Activated B cell treated with CpG ODN at 0.5 μM for 24 hours (primary cell): ENCODE measurements at regions of chr6 and their contacts with region 1.

Region 1: GRCh38 chr6:32971581-32972352 is 3.4 kb downstream of the BRD2 start:
- DNase-seq: peak; percentile 99
- ATAC-seq: peak; percentile 47
- H3K4me3 Mint-ChIP-seq: peak overlapping the region; percentile 91
- H3K27ac Mint-ChIP-seq: peak overlapping the region; percentile 99
- H3K4me1 Mint-ChIP-seq: peaks cover 44% of the 10 kb centered on the region
- H3K27me3 Mint-ChIP-seq: no peaks in the 10 kb centered on the region
- CTCF ChIP-seq: no peak

Region 2: DNA sequence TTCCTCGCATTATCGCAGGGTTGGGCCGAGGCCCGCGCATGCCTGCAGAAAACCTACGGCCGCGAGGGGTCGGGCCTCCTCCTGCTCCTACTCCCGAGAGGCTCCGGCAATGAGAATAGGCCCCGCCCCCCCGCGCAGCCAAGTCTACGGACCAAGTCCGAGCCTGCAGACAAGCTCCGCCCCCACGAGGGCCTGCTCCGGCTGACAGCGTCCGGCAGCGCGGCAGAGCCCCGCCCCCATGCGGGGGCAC is 776.2 kb before region 1 on chr6:
- CTCF ChIA-PET with region 1: no interaction called
- POLR2A ChIA-PET with region 1: interaction called, 13 read pairs
- intact Hi-C with region 1: loop called (anchors 2 kb)
- DNase-seq: peak; percentile 99
- ATAC-seq: peak; percentile 83
- H3K4me3 Mint-ChIP-seq: peak overlapping the region; percentile 99
- H3K27ac Mint-ChIP-seq: peak overlapping the region; percentile 100
- H3K4me1 Mint-ChIP-seq: peaks cover 57% of the 10 kb centered on the region
- H3K27me3 Mint-ChIP-seq: peaks cover 1% of the 10 kb centered on the region
- CTCF ChIP-seq: no peak

Region 3: GRCh38 chr6:32853541-32854375 is 118.0 kb before region 1 on chr6 and contains the starts of genes PSMB9 and TAP1:
- CTCF ChIA-PET with region 1: interaction called, 5 read pairs
- POLR2A ChIA-PET with region 1: interaction called, 145 read pairs
- intact Hi-C with region 1: no loop called
- DNase-seq: peak; percentile 91
- ATAC-seq: peak; percentile 80
- H3K4me3 Mint-ChIP-seq: peak within 1 kb of the TSS; percentile 99
- H3K27ac Mint-ChIP-seq: peak within 1 kb of the TSS; percentile 98
- H3K4me1 Mint-ChIP-seq: peaks cover 77% of the 10 kb centered on the region
- H3K27me3 Mint-ChIP-seq: no peaks in the 10 kb centered on the region
- CTCF ChIP-seq: peak; percentile 20
- total RNA-seq, gene PSMB9: 198 and 223 TPM in 2 replicates
- total RNA-seq, gene TAP1: 148 and 151 TPM in 2 replicates

Region 4: DNA sequence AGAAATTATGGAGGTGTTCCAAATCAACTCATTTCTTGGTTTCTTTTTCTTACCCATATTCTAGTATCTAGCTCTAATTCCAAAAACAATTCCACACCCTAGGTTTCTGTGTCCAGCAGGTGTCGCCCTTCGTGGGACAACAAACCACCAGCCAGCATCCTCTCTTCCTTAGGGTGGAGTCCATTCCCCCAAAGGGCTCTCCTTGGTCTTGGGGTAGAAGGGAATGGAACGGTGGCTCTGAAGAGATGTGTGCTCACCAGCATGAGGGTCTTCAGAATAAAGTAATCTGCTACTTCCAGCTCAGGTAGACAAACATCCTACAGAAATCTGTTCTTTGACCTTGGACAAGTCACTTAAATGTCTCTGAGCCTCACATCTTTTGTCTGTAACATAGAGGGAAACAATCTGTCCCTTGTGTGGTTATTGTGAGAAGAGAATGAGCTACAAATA is 38.1 kb before region 1 on chr6:
- CTCF ChIA-PET with region 1: interaction called, 151 read pairs
- POLR2A ChIA-PET with region 1: interaction called, 1,150 read pairs
- intact Hi-C with region 1: loop called (anchors 1 kb)
- DNase-seq: peak; percentile 60
- ATAC-seq: peak; percentile 54
- H3K4me3 Mint-ChIP-seq: no peak overlapping the region
- H3K27ac Mint-ChIP-seq: peak overlapping the region; percentile 79
- H3K4me1 Mint-ChIP-seq: peaks cover 92% of the 10 kb centered on the region
- H3K27me3 Mint-ChIP-seq: no peaks in the 10 kb centered on the region
- CTCF ChIP-seq: peak; percentile 65

Region 5: DNA sequence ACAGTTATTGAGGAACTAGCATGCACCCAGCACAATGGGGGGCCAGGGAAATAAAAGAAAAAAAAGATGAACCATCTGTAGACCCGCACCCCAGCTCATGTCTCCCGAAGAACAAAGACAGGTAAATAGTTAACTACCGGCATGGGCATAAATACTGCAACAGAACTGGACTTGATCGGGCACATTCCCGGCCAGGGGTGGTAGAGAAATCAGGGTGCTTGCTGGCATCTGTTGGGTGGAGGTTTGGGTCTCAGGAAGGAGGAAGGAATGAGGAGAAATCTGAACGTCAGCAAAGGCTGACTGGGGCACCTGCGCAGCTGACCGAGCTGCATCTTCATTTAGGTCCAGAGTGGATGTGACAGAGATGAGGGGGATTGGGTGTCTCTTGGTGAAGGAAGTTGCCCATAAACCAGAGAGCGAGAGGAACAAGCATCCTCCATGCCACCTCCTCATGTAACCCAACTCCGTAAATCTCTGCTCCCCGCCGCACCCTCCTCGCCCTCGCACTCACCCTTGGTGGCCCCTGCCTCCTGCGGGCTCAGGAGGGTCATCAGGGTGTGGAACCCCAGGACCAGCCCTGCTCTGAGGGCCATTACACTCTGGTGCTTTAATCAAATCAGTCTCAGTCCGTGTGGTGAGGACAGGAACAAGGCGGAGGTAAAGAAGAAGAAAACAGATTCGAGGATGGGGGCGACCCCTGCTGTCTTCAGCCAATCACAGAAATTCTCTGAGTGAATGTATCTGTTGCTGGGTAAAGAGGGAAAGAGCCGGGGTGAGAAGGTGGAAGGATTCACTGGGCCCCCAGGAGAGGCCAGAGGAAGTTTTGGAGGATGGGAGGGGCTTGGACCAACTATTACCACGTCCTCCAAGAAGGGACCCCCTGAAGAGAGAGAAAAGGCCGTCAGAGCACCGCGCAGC is 37.4 kb after region 1 on chr6 and contains the start of gene HLA-DOA:
- CTCF ChIA-PET with region 1: no interaction called
- POLR2A ChIA-PET with region 1: interaction called, 39 read pairs
- intact Hi-C with region 1: loop called (anchors 2 kb)
- DNase-seq: peak; percentile 61
- ATAC-seq: peak; percentile 95
- H3K4me3 Mint-ChIP-seq: peak within 1 kb of the TSS; percentile 98
- H3K27ac Mint-ChIP-seq: peak within 1 kb of the TSS; percentile 95
- H3K4me1 Mint-ChIP-seq: peaks cover 57% of the 10 kb centered on the region
- H3K27me3 Mint-ChIP-seq: no peaks in the 10 kb centered on the region
- CTCF ChIP-seq: no peak
- total RNA-seq, gene HLA-DOA: 153 and 167 TPM in 2 replicates

Region 6: DNA sequence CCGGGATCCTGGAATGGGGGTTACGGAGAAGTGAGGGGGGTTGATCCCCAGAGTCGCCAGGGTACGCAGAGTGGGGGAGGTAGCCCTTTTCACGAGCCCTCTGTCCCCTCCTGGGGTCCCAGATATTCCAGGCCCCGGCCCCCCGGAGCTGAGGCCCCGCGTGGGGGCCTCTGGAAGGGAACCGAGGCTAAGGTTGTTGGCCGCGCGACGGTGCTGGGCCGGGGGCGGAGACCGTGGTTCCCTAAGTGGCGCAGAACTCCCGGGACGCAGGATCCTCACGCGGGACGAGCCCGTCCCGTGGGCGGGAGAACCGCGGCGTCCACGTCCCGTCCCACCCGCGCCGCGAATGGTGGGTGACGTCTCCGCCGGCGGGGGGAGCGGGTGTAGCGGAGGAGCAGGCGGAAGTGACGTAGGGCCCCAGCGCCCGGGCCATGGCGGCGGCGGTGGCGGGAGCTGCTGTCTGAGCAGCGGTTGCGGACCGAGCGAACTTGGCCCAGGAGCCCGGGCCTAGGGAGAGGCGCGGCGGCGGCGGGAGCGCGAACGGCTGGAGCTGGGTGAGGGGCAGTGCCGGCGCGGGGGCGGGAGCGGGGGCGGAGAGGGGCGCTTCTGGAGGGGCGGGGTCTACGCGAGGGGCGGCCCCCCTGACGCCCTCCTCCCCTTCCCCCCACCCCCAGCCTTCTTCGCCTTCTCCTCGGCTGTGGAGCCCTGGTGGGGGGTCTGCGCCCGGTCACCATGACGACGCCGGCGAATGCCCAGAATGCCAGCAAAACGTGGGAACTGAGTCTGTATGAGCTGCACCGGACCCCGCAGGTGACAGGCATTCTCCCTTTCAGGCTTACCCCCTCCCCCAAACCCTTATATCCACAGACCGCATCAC is 236.6 kb after region 1 on chr6 and contains the start of gene RING1:
- CTCF ChIA-PET with region 1: no interaction called
- POLR2A ChIA-PET with region 1: interaction called, 19 read pairs
- intact Hi-C with region 1: no loop called
- DNase-seq: peak; percentile 88
- ATAC-seq: peak; percentile 51
- H3K4me3 Mint-ChIP-seq: peak within 1 kb of the TSS; percentile 87
- H3K27ac Mint-ChIP-seq: peak within 1 kb of the TSS; percentile 82
- H3K4me1 Mint-ChIP-seq: peaks cover 45% of the 10 kb centered on the region
- H3K27me3 Mint-ChIP-seq: peaks cover 13% of the 10 kb centered on the region
- CTCF ChIP-seq: no peak
- total RNA-seq, gene RING1: 41.7 and 43.8 TPM in 2 replicates

Region 7: GRCh38 chr6:33904050-33904746 is 932.4 kb after region 1 on chr6:
- CTCF ChIA-PET with region 1: no interaction called
- POLR2A ChIA-PET with region 1: no interaction called
- intact Hi-C with region 1: no loop called
- DNase-seq: no peak
- ATAC-seq: peak; percentile 45
- H3K4me3 Mint-ChIP-seq: no peak overlapping the region
- H3K27ac Mint-ChIP-seq: peak overlapping the region; percentile 61
- H3K4me1 Mint-ChIP-seq: peaks cover 49% of the 10 kb centered on the region
- H3K27me3 Mint-ChIP-seq: peaks cover 20% of the 10 kb centered on the region
- CTCF ChIP-seq: no peak